AG04449 (cell line): ENCODE measurements at regions of chr4 and their contacts with region 1.

Region 1: GRCh38 chr4:38856524-38857337 is at the start of gene TLR6:
- DNase-seq: no peak
- H3K4me3 ChIP-seq: peak within 1 kb of the TSS; percentile 39
- CTCF ChIP-seq: peak; percentile 50

Region 2: DNA sequence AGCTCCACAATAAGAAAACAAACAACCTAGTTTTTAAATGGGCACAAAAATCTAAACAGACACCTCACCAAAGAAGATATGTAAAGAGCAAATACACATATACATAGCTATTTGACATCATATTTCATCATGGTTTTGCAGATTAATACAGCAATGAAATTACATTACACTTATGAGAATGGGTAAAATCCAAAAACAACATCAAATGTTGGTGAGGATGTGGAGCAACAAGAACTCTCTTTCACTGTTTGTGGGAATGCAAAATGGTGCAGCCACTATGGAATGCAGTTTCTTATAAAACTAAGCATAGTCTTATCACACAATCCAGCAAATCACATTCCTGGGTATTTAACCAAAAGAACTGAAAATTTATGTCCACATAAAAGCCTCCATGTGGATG is 25.1 kb before region 1 on chr4:
- CTCF ChIA-PET with region 1: interaction called, 10 read pairs
- POLR2A ChIA-PET with region 1: no interaction called
- DNase-seq: peak; percentile 94
- H3K4me3 ChIP-seq: no peak overlapping the region
- CTCF ChIP-seq: no peak

Region 3: GRCh38 chr4:38837849-38838248 is 18.9 kb before region 1 on chr4:
- CTCF ChIA-PET with region 1: interaction called, 20 read pairs
- POLR2A ChIA-PET with region 1: no interaction called
- DNase-seq: no peak
- H3K4me3 ChIP-seq: no peak overlapping the region
- CTCF ChIP-seq: no peak

Region 4: GRCh38 chr4:38842994-38843393 is 13.7 kb before region 1 on chr4:
- CTCF ChIA-PET with region 1: interaction called, 20 read pairs
- POLR2A ChIA-PET with region 1: no interaction called
- DNase-seq: no peak
- H3K4me3 ChIP-seq: no peak overlapping the region
- CTCF ChIP-seq: no peak

Region 5: DNA sequence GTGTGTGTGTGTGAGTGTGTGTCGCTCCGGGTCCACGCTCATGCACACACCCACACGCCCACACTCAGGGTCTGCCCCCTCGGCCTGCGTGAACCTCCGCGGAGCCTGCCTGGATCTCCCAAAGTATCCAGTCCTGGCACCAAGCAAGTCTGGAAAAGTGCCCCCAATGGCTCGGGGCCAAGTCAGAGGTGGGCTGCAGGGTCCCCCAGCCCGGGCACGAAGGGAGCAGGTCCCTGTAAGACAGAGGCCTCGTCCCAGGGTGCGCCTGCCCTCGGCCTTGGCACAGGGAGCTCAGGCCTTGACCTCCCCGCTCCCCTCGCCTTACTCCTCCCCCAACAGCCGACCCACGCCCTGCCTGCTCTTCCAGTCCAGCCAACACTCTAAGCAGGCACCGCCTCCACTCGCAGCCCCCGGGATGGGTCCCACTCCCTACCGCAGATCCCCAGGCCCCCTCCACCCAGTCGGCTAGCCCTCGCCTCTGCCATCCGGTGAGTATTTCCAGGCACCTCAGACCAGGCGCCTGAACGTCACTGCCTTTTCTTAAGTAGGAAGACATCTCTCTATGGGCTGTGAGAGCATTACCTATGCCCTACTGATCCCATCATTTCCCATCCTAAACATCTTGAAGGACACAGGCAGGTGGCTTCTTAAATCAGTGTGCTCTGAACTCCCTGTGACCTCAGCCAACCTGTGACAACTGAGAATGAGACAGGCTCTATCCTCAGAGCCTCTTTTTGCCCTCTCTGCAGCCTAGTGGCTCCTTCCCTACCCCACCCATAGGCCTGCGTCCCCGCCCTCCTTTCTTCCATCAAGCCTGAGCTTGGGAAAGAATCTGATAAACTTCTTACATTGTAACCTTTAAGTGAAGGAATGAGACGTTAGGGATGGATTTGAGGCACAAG is 11.6 kb after region 1 on chr4:
- CTCF ChIA-PET with region 1: interaction called, 32 read pairs
- POLR2A ChIA-PET with region 1: no interaction called
- DNase-seq: no peak
- H3K4me3 ChIP-seq: peak overlapping the region; percentile 92
- CTCF ChIP-seq: no peak

Region 6: DNA sequence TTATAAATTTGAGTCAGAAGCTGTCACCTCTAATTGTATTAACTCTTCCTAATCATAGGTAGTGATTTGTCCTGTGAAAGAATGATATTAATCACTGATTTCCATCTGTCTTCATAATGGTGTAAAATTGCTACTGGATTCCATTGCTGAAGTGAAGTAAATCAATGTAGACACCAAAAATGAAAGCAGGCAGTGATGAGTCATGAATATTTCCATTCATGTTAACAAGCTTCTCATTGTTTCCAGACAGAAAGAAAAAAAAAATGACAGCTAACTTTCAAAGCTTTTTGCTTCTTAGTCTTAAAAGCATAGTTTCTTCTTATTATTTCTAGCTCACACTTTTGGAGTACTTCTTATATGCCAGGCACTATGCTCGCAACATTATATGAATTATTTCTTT is 32.4 kb after region 1 on chr4:
- CTCF ChIA-PET with region 1: interaction called, 14 read pairs
- POLR2A ChIA-PET with region 1: no interaction called
- DNase-seq: no peak
- H3K4me3 ChIP-seq: no peak overlapping the region
- CTCF ChIP-seq: no peak